ENCODE measurements at regions of chr18 and their contacts with region 1.

Region 1: DNA sequence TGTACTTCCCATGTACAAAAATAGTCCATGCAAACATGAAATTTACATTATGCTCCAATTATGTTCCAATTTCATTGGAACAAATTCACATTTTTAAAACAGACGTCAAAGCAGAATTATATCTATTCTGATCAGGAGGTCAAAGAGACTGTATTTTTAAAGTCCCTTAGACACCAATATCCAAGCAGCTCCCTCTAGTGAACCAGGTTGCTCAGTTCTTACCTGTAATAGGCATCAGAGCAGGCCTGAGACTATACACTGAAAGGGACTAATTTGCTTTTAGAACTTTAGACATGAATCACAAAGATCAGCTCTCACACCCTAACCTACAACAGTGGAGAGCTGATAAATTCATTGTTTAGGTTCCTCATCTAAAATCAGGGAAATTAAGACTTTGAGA is 273.9 kb downstream of the MBD2 start:
- DNase-seq: no peak
- H3K4me3 ChIP-seq: no peak overlapping the region
- H3K4me3 Mint-ChIP-seq: no peak overlapping the region
- H3K27ac Mint-ChIP-seq: no peak overlapping the region
- H3K4me1 ChIP-seq: peaks cover 9% of the 10 kb centered on the region
- H3K4me1 Mint-ChIP-seq: peaks cover 6% of the 10 kb centered on the region
- H3K27me3 ChIP-seq: no peaks in the 10 kb centered on the region
- H3K27me3 Mint-ChIP-seq: no peaks in the 10 kb centered on the region
- CTCF ChIP-seq: no peak

Region 2: DNA sequence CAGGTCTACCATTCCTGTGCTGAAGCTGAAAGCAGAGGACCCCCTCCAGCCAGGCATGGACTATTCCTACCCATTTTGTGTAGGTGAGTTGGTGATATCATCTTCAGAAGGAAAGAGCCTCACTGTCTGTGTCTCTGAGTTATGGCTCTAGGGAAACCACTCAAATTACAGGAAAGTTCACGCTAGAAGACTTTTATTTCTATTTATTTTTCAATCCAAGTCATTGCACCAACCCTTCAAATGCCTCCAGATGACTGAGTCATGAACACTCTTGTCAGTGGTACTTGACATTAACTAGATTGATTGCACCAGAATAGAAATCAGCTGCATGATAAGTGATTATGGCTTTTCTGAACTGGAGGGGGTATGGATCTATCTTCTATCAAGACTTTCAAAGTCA is 64.5 kb before region 1 on chr18:
- CTCF ChIA-PET with region 1: no interaction called
- POLR2A ChIA-PET with region 1: no interaction called
- intact Hi-C with region 1: no loop called
- DNase-seq: no peak
- H3K4me3 ChIP-seq: no peak overlapping the region
- H3K4me3 Mint-ChIP-seq: no peak overlapping the region
- H3K27ac Mint-ChIP-seq: no peak overlapping the region
- H3K4me1 ChIP-seq: no peaks in the 10 kb centered on the region; the same call in 1 of the 2 replicates
- H3K4me1 Mint-ChIP-seq: peaks cover 7% of the 10 kb centered on the region
- H3K27me3 ChIP-seq: no peaks in the 10 kb centered on the region
- H3K27me3 Mint-ChIP-seq: no peaks in the 10 kb centered on the region
- CTCF ChIP-seq: no peak

Region 3: DNA sequence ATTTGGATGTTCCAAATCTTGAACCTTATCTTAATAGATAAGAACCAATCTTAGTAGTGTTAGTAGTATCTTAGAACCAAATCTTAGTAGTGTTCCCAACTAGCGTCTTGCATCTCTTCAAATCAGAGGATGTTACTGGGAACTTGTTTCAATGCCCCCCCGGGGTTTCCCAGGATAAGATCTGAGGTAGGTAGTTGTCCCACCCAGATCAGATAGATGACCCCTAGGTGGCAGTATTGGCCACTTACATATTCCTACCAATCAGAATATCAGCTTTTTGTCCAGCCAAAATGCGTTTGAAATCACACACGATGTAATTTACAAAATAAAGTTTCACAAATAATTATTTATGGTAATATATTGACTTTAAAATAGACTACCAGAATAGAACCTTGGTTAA is 40.9 kb before region 1 on chr18:
- CTCF ChIA-PET with region 1: no interaction called
- POLR2A ChIA-PET with region 1: no interaction called
- intact Hi-C with region 1: loop called (anchors 1 kb)
- DNase-seq: peak in 1 of 2 experiments; percentile 42
- H3K4me3 ChIP-seq: no peak overlapping the region
- H3K4me3 Mint-ChIP-seq: no peak overlapping the region
- H3K27ac Mint-ChIP-seq: no peak overlapping the region
- H3K4me1 ChIP-seq: no peaks in the 10 kb centered on the region
- H3K4me1 Mint-ChIP-seq: no peaks in the 10 kb centered on the region
- H3K27me3 ChIP-seq: no peaks in the 10 kb centered on the region
- H3K27me3 Mint-ChIP-seq: no peaks in the 10 kb centered on the region
- CTCF ChIP-seq: peak; percentile 41 to 48